MCF 10A (cell line): ENCODE measurements at regions of chr20 and their contacts with region 1.

Region 1: DNA sequence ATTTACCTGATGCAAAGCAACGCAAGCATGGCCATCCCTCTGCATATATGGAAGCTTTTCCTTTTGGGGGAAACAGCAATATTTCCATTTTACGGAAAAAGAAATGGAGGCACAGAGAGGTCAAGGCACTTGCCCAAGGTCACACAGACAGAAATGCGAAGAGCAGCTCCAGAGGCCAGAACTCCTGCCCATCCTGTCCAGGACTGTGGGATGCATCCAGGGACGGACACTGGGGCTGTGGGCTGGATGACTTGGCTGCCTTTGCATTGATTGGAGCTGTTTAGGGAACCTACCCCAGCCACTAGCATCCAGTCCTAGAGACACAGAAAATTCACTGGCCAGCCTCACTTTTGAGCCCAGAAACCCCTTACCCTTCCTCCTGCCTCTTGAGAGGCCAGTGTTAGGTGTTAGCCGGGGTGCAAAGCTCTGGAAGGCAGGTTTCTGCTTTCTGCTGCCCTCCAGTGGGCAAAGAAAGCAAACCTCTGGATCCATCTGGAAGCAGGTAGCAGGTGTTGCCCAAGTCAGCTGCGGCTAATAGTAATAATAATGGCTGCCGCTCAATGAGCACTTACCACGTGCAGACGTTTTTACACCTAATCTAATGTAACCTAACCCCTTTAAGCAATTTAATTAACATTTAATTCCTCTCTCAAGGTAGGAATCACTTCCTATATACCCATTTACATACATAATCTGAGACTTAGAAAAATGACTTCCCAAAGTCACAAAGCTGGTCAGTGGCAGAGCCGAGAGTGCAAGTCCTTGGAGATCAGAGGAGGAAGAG is 31.7 kb upstream of the CCN5 start:
- DNase-seq: peak; percentile 63
- H3K4me3 Mint-ChIP-seq: no peak overlapping the region
- H3K27ac Mint-ChIP-seq: no peak overlapping the region
- H3K4me1 Mint-ChIP-seq: peaks cover 18% of the 10 kb centered on the region
- H3K27me3 Mint-ChIP-seq: no peaks in the 10 kb centered on the region
- CTCF ChIP-seq: peak; percentile 34

Region 2: GRCh38 chr20:44271915-44272663 is 411.4 kb before region 1 on chr20:
- CTCF ChIA-PET with region 1: no interaction called
- POLR2A ChIA-PET with region 1: no interaction called
- intact Hi-C with region 1: no loop called
- DNase-seq: no peak
- H3K4me3 Mint-ChIP-seq: no peak overlapping the region
- H3K27ac Mint-ChIP-seq: no peak overlapping the region
- H3K4me1 Mint-ChIP-seq: no peaks in the 10 kb centered on the region
- H3K27me3 Mint-ChIP-seq: peaks cover 17% of the 10 kb centered on the region
- CTCF ChIP-seq: no peak

Region 3: DNA sequence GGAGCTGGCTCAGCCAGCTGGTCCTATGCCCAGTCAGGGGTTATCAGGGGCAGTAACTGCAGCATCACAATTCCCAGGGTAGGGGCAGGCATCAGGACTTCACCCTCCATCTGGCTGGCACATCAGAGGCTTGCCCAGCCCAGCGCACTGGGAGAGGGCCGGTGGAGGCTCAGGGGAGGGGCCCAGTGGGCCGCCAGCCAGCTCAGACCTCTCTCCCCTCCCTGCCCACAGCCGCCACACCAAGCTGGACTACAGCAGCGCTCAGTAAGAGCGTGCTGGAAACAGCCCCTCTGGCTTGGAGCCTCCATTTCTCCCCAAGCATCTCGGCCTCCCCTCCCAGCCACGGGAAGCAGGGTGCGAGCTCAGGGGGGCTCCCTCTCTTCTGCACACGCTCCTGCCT is 53.9 kb before region 1 on chr20:
- CTCF ChIA-PET with region 1: interaction called, 4 read pairs
- POLR2A ChIA-PET with region 1: no interaction called
- intact Hi-C with region 1: loop called (anchors 2 kb)
- DNase-seq: no peak
- H3K4me3 Mint-ChIP-seq: no peak overlapping the region
- H3K27ac Mint-ChIP-seq: no peak overlapping the region
- H3K4me1 Mint-ChIP-seq: no peaks in the 10 kb centered on the region
- H3K27me3 Mint-ChIP-seq: no peaks in the 10 kb centered on the region
- CTCF ChIP-seq: no peak

Region 4: GRCh38 chr20:44651684-44652423 is 31.6 kb before region 1 on chr20 and contains the start of gene ADA:
- CTCF ChIA-PET with region 1: interaction called, 18 read pairs
- POLR2A ChIA-PET with region 1: interaction called, 11 read pairs
- intact Hi-C with region 1: no loop called
- DNase-seq: peak; percentile 65
- H3K4me3 Mint-ChIP-seq: peak within 1 kb of the TSS; percentile 78
- H3K27ac Mint-ChIP-seq: peak within 1 kb of the TSS; percentile 63
- H3K4me1 Mint-ChIP-seq: peaks cover 6% of the 10 kb centered on the region
- H3K27me3 Mint-ChIP-seq: no peaks in the 10 kb centered on the region
- CTCF ChIP-seq: no peak
- total RNA-seq, gene ADA: 5.1 and 6.0 TPM in 2 replicates

Region 5: DNA sequence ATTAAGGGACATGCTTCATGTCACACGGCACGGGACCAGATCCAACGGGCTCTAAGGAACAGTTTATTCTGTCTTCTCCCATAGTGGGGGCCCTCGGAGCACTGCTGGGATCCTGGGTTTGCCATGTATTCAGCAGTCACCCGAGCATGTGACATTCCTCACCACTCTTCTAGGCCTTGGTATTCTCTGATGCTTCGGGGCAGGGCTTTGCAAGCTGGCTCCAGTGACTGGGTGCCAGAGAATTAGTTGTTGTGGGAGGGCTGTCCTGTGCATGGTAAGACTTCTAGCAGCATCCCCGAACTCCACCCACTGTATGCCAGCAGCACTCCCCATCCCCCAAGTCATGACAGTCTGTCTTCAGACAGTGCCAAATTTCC is 37.1 kb after region 1 on chr20:
- CTCF ChIA-PET with region 1: interaction called, 78 read pairs
- POLR2A ChIA-PET with region 1: interaction called, 4 read pairs
- intact Hi-C with region 1: no loop called
- DNase-seq: peak; percentile 81
- H3K4me3 Mint-ChIP-seq: peak overlapping the region; percentile 35
- H3K27ac Mint-ChIP-seq: peak overlapping the region; percentile 90
- H3K4me1 Mint-ChIP-seq: peaks cover 42% of the 10 kb centered on the region
- H3K27me3 Mint-ChIP-seq: no peaks in the 10 kb centered on the region
- CTCF ChIP-seq: no peak

Region 6: DNA sequence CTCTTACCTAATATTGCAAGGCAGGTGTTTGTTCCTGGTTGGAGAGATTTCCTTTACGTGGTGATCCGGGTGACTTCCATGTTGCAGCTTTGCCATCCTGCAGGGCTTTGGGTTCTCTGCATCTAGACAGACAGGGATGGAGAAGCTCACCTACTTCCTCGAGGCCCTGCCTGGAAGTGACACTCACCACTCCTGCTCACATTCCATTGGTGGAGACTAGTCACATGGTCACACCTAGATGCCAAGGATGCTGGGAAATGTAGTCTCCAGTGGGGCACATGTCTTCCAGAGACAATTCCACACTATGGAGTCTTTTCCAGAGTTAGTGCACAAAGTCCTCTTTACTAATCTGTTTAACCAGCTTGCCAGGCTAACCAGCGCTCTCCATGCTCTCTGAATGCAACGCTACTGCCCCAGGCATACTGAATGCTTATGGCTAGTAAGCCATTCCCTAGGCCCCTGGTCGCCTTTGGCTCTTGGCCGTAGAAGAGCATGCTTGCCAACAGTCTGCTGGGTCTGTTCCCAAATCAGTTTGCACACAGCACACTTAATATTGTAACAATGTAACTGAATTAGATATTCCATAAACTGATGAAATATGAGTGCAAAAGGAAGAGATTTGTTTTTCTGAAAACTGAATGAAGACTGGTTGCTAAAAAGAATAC is 55.5 kb after region 1 on chr20:
- CTCF ChIA-PET with region 1: interaction called, 317 read pairs
- POLR2A ChIA-PET with region 1: interaction called, 113 read pairs
- intact Hi-C with region 1: no loop called
- DNase-seq: peak; percentile 89
- H3K4me3 Mint-ChIP-seq: peak overlapping the region; percentile 33
- H3K27ac Mint-ChIP-seq: no peak overlapping the region
- H3K4me1 Mint-ChIP-seq: peaks cover 24% of the 10 kb centered on the region
- H3K27me3 Mint-ChIP-seq: peaks cover 29% of the 10 kb centered on the region
- CTCF ChIP-seq: no peak

Region 7: GRCh38 chr20:44866703-44867335 is 183.4 kb after region 1 on chr20:
- CTCF ChIA-PET with region 1: interaction called, 29 read pairs
- POLR2A ChIA-PET with region 1: no interaction called
- intact Hi-C with region 1: loop called (anchors 1 kb)
- DNase-seq: no peak
- H3K4me3 Mint-ChIP-seq: no peak overlapping the region
- H3K27ac Mint-ChIP-seq: no peak overlapping the region
- H3K4me1 Mint-ChIP-seq: peaks cover 11% of the 10 kb centered on the region
- H3K27me3 Mint-ChIP-seq: peaks cover 32% of the 10 kb centered on the region
- CTCF ChIP-seq: no peak